Caco-2 (cell line): ENCODE measurements at regions of chr1 and their contacts with region 1.

Region 1: DNA sequence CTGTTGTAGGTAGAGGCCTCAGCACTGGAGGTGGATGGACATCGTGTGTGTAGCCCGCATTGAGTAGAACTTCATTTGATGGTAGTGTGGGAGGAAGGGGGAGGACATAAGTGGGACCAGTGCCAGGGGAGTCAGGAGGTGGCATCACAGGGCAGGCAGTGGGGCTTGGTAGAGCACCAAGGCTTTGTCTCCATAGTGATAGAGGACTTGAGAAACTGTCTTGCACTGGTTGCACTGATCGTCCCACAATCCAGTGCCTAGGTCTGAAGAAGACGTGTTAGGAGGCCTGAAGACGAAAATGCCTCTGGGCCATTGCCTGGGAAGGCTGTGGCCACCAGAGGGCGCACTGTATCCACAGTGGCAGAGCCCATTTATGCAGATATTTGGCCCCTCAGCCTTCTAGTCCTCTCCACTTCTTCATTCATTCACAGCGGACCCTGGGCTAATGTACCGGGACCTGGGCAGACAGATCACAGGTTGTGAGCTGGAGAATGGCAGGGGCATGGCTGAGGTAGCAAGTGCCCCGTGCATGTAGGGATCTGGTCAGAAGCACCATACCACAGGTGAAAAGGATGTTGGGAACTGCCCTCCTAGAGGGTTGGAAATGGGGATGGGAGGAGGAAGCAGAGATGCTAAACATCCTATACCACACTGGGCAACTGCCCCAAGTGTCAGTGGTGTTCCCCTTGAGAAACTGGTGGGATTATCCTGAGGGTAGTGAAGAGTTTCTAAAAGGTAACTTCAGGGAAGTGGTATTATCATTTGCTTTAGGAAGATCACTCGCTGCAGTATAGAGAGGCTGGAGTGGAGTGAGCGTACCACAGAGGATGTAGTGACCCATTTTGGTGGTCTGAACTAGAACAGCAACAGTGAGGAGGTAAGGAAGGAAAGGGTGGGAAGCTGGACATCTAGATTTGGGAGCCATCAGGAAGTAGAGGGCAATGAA is 95.3 kb downstream of the PIK3R3 start:
- DNase-seq: peak; percentile 74 to 80
- H3K4me3 ChIP-seq: no peak overlapping the region
- H3K4me3 Mint-ChIP-seq: no peak overlapping the region
- H3K27ac Mint-ChIP-seq: no peak overlapping the region
- H3K4me1 ChIP-seq: no peaks in the 10 kb centered on the region
- H3K4me1 Mint-ChIP-seq: no peaks in the 10 kb centered on the region
- H3K27me3 ChIP-seq: no peaks in the 10 kb centered on the region
- H3K27me3 Mint-ChIP-seq: no peaks in the 10 kb centered on the region
- CTCF ChIP-seq: peak; percentile 77 to 90

Region 2: DNA sequence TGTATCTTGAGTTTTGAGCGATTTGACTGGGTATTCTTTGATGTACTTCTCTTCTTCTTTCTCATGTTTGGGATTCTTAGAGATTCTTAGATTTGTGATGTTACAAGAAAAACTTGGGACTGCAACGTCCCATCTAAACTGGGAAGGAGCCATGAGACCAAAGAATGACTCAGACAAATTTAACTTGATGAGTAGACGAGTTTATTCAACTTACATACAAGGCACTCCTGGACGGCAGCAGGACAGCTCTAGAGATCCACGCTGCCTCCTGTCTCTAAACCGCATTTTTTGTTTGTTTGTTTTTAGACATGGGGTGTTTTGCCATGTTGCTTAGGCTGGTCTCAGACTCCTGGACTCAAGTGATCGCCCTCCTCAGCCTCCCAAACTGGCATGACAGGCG is 41.9 kb before region 1 on chr1:
- CTCF ChIA-PET with region 1: no interaction called
- POLR2A ChIA-PET with region 1: no interaction called
- intact Hi-C with region 1: no loop called
- DNase-seq: no peak
- H3K4me3 ChIP-seq: no peak overlapping the region
- H3K4me3 Mint-ChIP-seq: no peak overlapping the region
- H3K27ac Mint-ChIP-seq: no peak overlapping the region
- H3K4me1 ChIP-seq: no peaks in the 10 kb centered on the region
- H3K4me1 Mint-ChIP-seq: no peaks in the 10 kb centered on the region
- H3K27me3 ChIP-seq: no peaks in the 10 kb centered on the region
- H3K27me3 Mint-ChIP-seq: no peaks in the 10 kb centered on the region
- CTCF ChIP-seq: no peak

Region 3: GRCh38 chr1:46132529-46133180 is 95.5 kb after region 1 on chr1 and contains the start of gene PIK3R3:
- CTCF ChIA-PET with region 1: no interaction called
- POLR2A ChIA-PET with region 1: no interaction called
- intact Hi-C with region 1: loop called (anchors 2 kb)
- DNase-seq: peak; percentile 96 to 98
- H3K4me3 ChIP-seq: peak within 1 kb of the TSS; percentile 66
- H3K4me3 Mint-ChIP-seq: peak within 1 kb of the TSS; percentile 100
- H3K27ac Mint-ChIP-seq: peak within 1 kb of the TSS; percentile 100
- H3K4me1 ChIP-seq: no peaks in the 10 kb centered on the region
- H3K4me1 Mint-ChIP-seq: no peaks in the 10 kb centered on the region
- H3K27me3 ChIP-seq: no peaks in the 10 kb centered on the region
- H3K27me3 Mint-ChIP-seq: peaks cover 3% of the 10 kb centered on the region
- CTCF ChIP-seq: no peak
- total RNA-seq, gene PIK3R3: 2.2 and 3.6 TPM in 2 replicates

Region 4: GRCh38 chr1:46179138-46180081 is 142.2 kb after region 1 on chr1:
- CTCF ChIA-PET with region 1: interaction called, 3 read pairs
- POLR2A ChIA-PET with region 1: no interaction called
- intact Hi-C with region 1: loop called (anchors 1 kb)
- DNase-seq: peak; percentile 79 to 81
- H3K4me3 ChIP-seq: no peak overlapping the region
- H3K4me3 Mint-ChIP-seq: no peak overlapping the region
- H3K27ac Mint-ChIP-seq: no peak overlapping the region
- H3K4me1 ChIP-seq: peaks cover 10% of the 10 kb centered on the region
- H3K4me1 Mint-ChIP-seq: no peaks in the 10 kb centered on the region
- H3K27me3 ChIP-seq: no peaks in the 10 kb centered on the region
- H3K27me3 Mint-ChIP-seq: no peaks in the 10 kb centered on the region
- CTCF ChIP-seq: peak; percentile 84 to 89